ENCODE measurements at regions of chr2 and their contacts with region 1.

Region 1: DNA sequence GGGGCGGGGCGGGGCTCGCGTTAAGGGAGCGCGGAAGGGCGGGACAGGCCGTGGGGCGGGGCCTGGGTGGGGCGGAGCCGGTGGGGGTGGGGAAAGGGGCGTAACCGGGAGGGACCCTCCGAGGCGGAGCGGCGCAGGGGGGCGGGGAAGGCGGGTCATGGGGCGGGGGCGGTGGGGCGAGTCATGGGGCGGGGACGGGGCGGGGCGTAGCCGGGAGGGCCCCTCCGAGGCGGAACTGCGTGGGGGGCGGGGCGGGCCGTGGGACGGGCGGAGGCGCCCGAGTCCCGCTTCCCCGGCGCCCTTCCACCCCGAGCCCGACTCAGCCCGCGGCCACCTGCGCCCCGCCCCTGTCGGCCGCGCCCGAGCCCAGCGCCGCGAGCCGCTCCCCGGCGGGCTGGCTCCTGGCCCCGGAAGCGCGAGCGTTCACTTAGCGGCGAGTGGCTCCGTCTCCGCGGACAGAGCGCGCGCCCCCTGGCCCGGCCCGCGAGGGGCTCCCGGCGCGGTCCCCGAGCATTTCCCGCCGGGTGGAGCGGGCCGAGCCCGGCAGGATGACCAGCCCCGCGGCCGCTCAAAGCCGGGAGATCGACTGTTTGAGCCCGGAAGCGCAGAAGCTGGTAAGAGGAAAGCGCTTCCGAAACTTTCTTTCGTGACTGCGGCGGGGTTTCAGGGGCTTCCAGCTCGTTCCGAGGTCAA is 64.7 kb downstream of the LRRFIP1 start:
- DNase-seq: peak; percentile 98
- ATAC-seq: peak; percentile 59
- H3K4me3 Mint-ChIP-seq: peak overlapping the region; percentile 97
- H3K27ac Mint-ChIP-seq: peak overlapping the region; percentile 97
- H3K4me1 Mint-ChIP-seq: peaks cover 64% of the 10 kb centered on the region
- H3K27me3 Mint-ChIP-seq: no peaks in the 10 kb centered on the region

Region 2: DNA sequence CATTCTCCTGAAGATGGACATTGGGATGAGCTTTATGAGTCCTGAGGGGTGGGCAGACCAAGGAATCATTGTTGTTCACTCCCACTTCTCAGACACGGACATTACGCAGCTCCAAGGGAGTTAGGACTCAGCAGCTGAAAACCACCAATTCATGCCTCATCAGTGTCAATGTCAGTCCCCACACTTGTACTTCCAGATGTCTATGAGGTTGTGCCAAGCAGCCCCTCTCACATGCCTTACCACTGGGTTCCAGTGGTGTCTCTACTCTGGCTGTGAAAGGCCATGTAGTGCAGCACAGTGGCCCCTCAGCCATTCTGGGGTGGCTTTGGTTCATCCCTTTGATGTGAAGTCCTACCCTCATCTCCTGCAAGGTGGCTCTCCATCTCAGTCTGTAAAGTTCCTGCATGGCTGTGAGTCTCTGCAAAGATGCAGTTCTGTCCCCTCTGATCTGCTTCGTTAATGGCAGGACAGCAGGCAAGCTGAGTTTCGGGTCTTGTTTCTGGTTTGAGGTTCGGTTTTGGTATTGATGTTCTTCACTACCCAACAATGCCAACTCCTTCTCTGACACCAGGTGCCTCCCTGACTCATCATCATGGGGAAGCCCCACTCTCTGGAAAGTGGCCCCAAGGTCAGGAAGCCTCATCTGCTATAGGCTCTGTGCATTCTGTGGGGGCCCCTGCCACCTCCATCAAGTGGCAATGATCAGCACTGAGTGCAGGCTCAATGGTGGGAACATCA is 264.1 kb before region 1 on chr2:
- CTCF ChIA-PET with region 1: no interaction called
- POLR2A ChIA-PET with region 1: interaction called, 3 read pairs
- intact Hi-C with region 1: loop called (anchors 1 to 5 kb)
- DNase-seq: peak; percentile 92
- ATAC-seq: peak; percentile 79
- H3K4me3 Mint-ChIP-seq: peak overlapping the region; percentile 34
- H3K27ac Mint-ChIP-seq: peak overlapping the region; percentile 97
- H3K4me1 Mint-ChIP-seq: peaks cover 91% of the 10 kb centered on the region
- H3K27me3 Mint-ChIP-seq: peaks cover 2% of the 10 kb centered on the region

Region 3: GRCh38 chr2:237524631-237525030 is 167.4 kb before region 1 on chr2:
- CTCF ChIA-PET with region 1: no interaction called
- POLR2A ChIA-PET with region 1: no interaction called
- intact Hi-C with region 1: no loop called
- DNase-seq: no peak
- ATAC-seq: no peak
- H3K4me3 Mint-ChIP-seq: no peak overlapping the region
- H3K27ac Mint-ChIP-seq: no peak overlapping the region
- H3K4me1 Mint-ChIP-seq: no peaks in the 10 kb centered on the region
- H3K27me3 Mint-ChIP-seq: no peaks in the 10 kb centered on the region

Region 4: GRCh38 chr2:237674731-237675276 is 17.2 kb before region 1 on chr2:
- CTCF ChIA-PET with region 1: interaction called, 43 read pairs
- POLR2A ChIA-PET with region 1: interaction called, 35 read pairs
- intact Hi-C with region 1: loop called (anchors 1 kb)
- DNase-seq: peak; percentile 86
- ATAC-seq: peak; percentile 61
- H3K4me3 Mint-ChIP-seq: peak overlapping the region; percentile 74
- H3K27ac Mint-ChIP-seq: peak overlapping the region; percentile 90
- H3K4me1 Mint-ChIP-seq: peaks cover 49% of the 10 kb centered on the region
- H3K27me3 Mint-ChIP-seq: no peaks in the 10 kb centered on the region

Region 5: DNA sequence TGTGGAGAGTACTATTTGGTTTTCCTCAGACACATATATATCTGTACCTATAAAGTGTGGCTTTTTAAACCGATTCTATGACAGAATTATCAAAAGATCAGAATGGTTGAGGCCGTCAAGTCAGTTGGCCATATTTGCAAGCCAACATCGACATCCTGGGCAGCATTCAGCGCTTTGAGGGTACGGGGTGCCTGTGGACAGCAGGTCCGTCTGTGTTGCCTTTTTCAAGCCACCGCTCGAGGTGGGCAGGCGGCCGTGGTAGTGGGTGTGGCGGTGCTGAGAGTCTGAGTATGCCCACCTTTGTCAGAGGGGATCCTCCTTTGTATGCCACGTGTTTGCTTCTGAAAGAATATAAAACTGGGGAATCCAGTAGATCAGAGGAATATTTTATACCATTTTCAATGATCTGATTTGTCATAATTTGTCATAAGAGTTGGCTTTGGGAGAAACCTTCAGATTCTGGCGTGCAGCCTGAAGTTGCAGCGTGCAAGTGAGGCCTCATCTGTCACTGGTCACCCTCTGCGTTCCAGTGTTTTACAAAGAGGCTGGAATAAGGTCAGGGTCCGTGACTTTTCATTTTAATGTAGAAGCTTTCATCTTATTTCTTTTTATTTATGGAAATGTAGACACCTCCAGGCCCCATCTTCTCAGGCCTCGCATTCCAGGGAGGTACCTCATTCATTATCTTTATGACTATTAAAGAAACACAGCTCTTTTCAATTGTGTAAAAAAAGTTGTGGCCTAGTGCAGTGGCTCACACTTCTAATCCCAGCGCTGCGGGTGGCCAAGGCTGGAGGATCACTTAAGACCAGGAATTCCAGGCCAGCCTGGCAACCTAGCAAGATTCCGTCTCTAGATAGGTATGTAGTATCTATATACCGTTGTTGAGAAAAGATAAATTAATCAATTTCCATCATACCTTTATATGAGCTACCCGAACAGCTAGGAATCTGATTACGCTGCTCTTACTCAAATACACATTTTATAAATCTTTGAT is 68.8 kb after region 1 on chr2:
- CTCF ChIA-PET with region 1: no interaction called
- POLR2A ChIA-PET with region 1: no interaction called
- intact Hi-C with region 1: no loop called
- DNase-seq: no peak
- ATAC-seq: no peak
- H3K4me3 Mint-ChIP-seq: no peak overlapping the region
- H3K27ac Mint-ChIP-seq: no peak overlapping the region
- H3K4me1 Mint-ChIP-seq: peaks cover 4% of the 10 kb centered on the region
- H3K27me3 Mint-ChIP-seq: no peaks in the 10 kb centered on the region

Region 6: DNA sequence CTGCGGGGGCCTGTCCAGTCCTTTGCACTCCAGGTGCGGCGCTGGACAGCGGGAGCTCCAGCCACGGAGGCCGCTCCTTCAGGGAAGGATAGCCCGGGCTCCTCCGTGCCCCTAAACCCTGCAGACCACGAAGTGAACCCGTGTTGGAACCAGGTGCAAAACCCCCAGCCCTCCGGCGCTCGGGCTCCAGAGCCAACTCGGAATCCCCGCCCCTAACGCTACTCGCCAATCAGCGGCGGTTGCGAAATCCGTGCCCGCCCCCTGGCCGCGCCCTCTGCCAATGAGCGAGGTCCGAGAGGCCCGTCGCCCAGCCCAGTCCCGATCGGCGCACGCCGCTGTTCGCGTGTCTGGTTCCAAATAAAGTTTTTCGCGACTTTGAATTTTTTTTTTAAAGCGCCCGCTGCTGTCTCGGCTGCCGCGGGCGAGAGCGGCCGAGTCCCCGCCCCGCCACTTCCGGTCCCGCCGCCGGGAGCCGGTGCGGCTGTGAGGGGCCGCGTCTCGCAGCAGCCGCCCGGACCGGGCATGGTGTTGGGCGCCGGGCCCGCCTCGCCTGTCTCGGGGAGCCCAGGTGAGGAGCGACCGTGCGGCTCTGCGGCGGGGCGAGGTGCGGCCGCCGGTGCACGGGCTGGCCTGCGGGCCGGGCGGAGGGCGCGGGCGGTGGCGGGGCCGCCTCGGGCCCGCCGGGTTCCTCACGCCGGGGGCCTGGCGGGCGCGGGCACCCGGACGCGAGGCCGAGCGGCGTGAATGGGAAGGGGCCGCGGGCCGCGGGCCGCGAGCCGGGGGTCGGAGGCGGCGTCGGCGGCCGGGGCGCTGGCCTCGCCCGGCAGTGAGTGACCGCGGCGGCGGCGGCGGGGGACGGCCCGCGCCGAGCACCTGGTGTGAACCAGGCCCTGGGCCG is 274.8 kb after region 1 on chr2 and contains the start of gene UBE2F:
- CTCF ChIA-PET with region 1: no interaction called
- POLR2A ChIA-PET with region 1: no interaction called
- intact Hi-C with region 1: loop called (anchors 1 to 5 kb)
- DNase-seq: peak; percentile 98
- ATAC-seq: peak; percentile 95
- H3K4me3 Mint-ChIP-seq: peak within 1 kb of the TSS; percentile 78
- H3K27ac Mint-ChIP-seq: peak within 1 kb of the TSS; percentile 88
- H3K4me1 Mint-ChIP-seq: peaks cover 38% of the 10 kb centered on the region
- H3K27me3 Mint-ChIP-seq: no peaks in the 10 kb centered on the region
- total RNA-seq, gene UBE2F: 59.2 to 75.5 TPM

Region 7: DNA sequence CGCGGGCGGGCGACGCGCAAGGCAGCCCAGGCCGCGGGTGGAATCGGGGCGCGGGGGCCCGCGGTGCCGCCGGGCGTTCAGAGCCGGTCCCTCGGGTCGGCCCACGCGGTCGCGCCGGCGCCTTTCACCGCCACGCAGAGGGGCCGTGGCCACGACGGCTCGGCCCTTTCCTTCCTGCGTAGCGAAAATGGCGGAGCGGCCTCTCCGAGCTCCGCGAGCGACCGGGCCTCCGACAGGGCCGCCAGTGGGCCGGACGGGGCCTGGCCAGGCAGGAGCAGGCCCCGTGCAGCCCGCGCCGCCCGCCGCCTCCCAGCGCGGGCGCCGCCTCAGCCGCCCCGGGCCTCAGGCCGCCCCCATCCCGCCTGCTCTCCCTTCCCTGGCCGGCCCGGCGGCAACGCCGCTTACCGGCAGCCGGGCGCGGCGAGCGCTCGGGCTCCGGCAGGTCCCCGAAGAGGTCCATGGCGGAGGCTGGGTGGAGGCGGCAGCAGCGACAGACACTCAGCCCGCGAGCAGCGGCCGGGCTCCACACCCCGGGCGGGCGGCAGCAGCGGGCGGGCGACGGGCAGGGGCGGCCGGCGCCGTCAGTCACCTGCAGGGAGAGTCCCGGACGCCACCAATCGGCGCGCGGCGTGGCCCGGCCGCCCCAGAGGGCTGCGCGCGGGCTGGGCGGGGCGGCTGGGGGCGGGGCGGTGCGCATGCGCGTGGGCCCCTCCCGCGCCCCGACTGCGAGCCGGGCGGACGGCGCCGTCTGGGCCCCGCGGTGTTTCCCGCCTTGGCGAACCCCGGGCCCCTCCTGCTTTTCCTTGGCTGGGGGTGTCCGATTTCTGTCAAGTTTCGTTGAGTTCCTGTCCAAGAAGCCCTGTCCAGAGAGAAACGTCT is 511.3 kb after region 1 on chr2 and contains the start of gene ILKAP:
- CTCF ChIA-PET with region 1: no interaction called
- POLR2A ChIA-PET with region 1: no interaction called
- intact Hi-C with region 1: loop called in 1 of 2 experiments (anchors 1 kb)
- DNase-seq: peak; percentile 95
- ATAC-seq: peak; percentile 98
- H3K4me3 Mint-ChIP-seq: peak within 1 kb of the TSS; percentile 83
- H3K27ac Mint-ChIP-seq: peak within 1 kb of the TSS; percentile 87
- H3K4me1 Mint-ChIP-seq: peaks cover 46% of the 10 kb centered on the region
- H3K27me3 Mint-ChIP-seq: no peaks in the 10 kb centered on the region
- total RNA-seq, gene ILKAP: 39.2 to 44.3 TPM